ENCODE measurements at regions of chr14 and their contacts with region 1.

Region 1: GRCh38 chr14:69398053-69398817 is at the starts of genes ERH and SLC39A9:
- DNase-seq: peak; percentile 98
- ATAC-seq: peak; percentile 83
- H3K4me3 ChIP-seq: peak within 1 kb of the TSS; percentile 82 to 99 (median 94)
- H3K4me3 Mint-ChIP-seq: peak within 1 kb of the TSS; percentile 95
- H3K27ac ChIP-seq: peak within 1 kb of the TSS; percentile 90 to 99
- H3K27ac Mint-ChIP-seq: peak within 1 kb of the TSS; percentile 98
- H3K4me1 ChIP-seq: peaks cover 41 to 47% of the 10 kb centered on the region in 2 donors
- H3K4me1 Mint-ChIP-seq: peaks cover 57% of the 10 kb centered on the region
- H3K27me3 ChIP-seq: no peaks in the 10 kb centered on the region
- H3K27me3 Mint-ChIP-seq: no peaks in the 10 kb centered on the region
- CTCF ChIP-seq: no peak
- total RNA-seq, gene ERH: 156 and 169 TPM in 2 replicates
- total RNA-seq, gene SLC39A9: 59.1 and 66.2 TPM in 2 replicates

Region 2: DNA sequence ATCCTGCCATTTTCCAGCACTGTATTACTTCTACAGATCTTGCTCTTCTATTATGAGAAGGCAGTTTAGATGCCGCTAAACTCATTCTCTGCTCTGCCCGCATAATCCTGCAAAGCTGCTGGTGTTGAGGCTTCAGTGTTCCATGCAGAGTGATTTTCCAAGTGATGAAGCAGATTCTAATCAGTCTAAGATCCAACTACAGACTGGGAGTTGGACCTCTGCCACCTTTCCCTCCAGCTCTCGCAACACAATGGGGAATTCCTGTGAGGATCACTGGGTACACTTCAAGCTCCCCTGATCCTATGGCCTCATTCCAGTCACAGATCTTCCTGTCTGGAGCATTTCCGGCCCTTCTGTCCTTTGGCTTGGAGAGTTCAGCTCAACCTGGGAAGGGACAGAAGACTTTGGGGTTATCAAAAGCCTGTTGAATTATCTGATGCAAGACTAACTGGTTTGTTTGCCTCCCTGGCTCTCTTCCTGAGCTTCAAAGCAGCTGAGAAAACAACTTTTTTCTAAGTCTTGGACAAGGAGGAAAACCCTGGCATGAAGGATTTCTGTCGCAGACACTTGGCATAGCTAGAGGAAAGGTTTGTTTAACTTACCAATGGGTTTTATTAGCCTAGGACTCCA is 939.3 kb before region 1 on chr14:
- CTCF ChIA-PET with region 1: no interaction called
- POLR2A ChIA-PET with region 1: no interaction called
- intact Hi-C with region 1: no loop called
- DNase-seq: no peak
- ATAC-seq: no peak
- H3K4me3 ChIP-seq: no peak overlapping the region
- H3K4me3 Mint-ChIP-seq: no peak overlapping the region
- H3K27ac ChIP-seq: no peak overlapping the region
- H3K27ac Mint-ChIP-seq: peak overlapping the region; percentile 59
- H3K4me1 ChIP-seq: peaks cover 12% of the 10 kb centered on the region in 2 donors
- H3K4me1 Mint-ChIP-seq: peaks cover 11% of the 10 kb centered on the region
- H3K27me3 ChIP-seq: no peaks in the 10 kb centered on the region
- H3K27me3 Mint-ChIP-seq: no peaks in the 10 kb centered on the region
- CTCF ChIP-seq: no peak

Region 3: DNA sequence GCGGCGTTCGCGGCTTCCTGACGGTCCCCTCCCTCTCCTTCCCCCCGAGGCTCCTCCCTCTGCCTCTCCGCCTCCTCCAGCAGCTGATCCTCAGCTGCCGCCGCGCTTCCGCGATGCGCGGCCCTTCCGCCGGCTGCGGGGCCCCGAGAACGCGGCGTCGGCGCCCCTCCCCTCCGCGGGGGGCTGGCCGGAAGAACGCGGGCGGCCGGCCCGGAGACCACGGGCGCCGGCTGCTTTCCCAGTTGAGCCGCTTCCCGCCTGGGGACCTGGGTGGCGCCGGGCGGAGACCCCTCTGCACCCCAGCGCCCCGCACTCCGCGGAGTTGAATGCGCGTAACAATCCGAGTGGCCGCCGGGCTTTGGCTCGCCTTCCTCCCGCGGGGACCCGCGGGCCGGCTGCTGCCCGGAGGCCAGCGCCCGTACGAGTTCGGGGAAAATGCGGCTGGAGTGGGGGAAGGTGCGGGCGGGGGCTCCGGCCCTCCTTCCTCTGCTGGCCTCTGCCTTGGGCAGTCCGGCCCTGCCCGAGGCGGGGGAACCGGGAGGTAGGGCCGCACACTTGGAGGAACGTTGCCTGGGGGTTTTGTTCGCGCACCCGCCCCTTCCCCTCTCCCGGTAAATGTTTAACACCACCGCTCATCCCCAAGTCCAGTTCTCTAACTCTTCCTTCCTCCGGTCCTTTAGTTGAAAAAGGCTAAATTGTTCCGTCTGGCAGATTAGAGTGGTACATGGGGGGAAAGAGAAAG is 244.9 kb before region 1 on chr14:
- CTCF ChIA-PET with region 1: no interaction called
- POLR2A ChIA-PET with region 1: no interaction called
- intact Hi-C with region 1: loop called (anchors 1 kb)
- DNase-seq: peak; percentile 95
- ATAC-seq: peak; percentile 92
- H3K4me3 ChIP-seq: peak overlapping the region; percentile 21 to 94 (median 92)
- H3K4me3 Mint-ChIP-seq: peak overlapping the region; percentile 89
- H3K27ac ChIP-seq: peak overlapping the region; percentile 56 to 72
- H3K27ac Mint-ChIP-seq: peak overlapping the region; percentile 95
- H3K4me1 ChIP-seq: peaks cover 9 to 21% of the 10 kb centered on the region in 2 donors
- H3K4me1 Mint-ChIP-seq: peaks cover 32% of the 10 kb centered on the region
- H3K27me3 ChIP-seq: no peaks in the 10 kb centered on the region
- H3K27me3 Mint-ChIP-seq: peaks cover 3% of the 10 kb centered on the region
- CTCF ChIP-seq: no peak

Region 4: DNA sequence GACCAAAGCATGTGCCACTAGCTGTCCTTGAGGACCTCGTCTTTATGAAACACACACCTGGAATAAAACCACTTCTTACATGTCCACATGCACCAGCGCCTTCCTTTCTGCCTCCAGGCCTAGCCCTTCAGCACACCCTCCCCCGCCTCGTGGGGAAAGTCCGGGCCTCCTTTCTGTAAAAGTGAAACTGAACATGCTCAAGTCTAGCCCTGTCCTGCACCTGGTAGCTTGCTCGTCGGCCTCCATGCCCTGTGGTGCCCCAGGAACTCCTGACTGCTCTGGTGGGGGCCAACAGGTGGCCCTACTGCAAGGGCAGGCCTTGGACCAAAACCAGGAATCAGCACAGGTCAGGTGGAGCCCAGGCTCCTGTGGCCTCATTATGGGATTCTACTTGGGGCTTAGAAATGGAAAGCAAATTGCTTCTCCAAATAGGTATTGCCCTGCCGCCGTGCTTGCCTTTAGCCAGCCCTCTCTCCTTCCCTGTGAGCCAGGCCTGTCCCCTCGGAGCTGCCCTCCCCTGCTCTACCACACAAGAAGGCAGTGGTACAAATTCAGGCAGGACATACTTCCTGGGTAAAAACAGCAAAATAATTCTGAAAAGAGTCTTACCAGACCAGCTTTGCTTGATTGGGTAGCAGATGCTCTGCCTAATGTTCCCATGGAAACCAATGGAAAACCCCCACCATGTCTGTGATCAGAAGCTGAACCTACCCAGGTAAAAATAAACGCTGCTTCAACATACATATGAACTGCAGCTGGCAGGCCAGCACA is 43.7 kb before region 1 on chr14:
- CTCF ChIA-PET with region 1: interaction called, 3 read pairs
- POLR2A ChIA-PET with region 1: interaction called, 8 read pairs
- intact Hi-C with region 1: loop called (anchors 1 kb)
- DNase-seq: peak; percentile 85
- ATAC-seq: peak; percentile 90
- H3K4me3 ChIP-seq: peak overlapping the region in 3 of 5 experiments; percentile 30 to 48 (median 31)
- H3K4me3 Mint-ChIP-seq: peak overlapping the region; percentile 81
- H3K27ac ChIP-seq: peak overlapping the region; percentile 87 to 93
- H3K27ac Mint-ChIP-seq: peak overlapping the region; percentile 94
- H3K4me1 ChIP-seq: peaks cover 27 to 45% of the 10 kb centered on the region in 2 donors
- H3K4me1 Mint-ChIP-seq: peaks cover 49% of the 10 kb centered on the region
- H3K27me3 ChIP-seq: no peaks in the 10 kb centered on the region
- H3K27me3 Mint-ChIP-seq: no peaks in the 10 kb centered on the region
- CTCF ChIP-seq: no peak

Region 5: DNA sequence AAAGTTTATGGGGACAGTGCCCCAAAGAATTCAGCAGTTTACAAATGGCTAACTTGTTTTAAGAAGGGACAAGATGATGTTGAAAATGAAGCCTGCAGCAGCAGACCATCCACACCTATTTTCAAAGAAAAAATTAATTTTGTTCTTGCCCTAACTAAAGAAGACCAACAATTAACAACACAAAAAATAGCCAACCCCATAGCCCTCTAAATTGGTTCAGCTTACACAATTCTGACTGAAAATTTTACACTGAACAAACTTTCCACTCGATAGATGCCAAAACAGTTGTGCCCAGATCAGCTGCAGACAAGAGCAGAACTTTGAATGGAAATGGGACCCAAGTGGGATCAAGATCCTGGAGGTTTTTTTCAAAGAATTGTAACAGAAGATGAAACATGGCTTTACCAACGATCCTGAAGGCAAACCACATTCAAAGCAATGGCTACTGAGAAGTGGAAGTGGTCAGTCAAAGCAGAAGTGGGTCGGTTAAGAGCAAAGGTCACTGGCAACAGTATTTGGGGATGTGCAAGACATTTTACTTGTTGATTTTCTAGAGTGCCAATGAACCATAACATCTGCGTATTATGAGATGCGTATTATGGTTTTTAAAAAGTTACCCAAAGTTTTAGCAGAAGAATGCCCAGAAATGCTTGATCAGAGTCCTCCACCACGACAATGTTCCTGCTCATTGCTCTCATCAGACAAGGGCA is 30.2 kb after region 1 on chr14:
- CTCF ChIA-PET with region 1: interaction called, 3 read pairs
- POLR2A ChIA-PET with region 1: interaction called, 4 read pairs
- intact Hi-C with region 1: loop called (anchors 2 kb)
- DNase-seq: peak; percentile 27
- ATAC-seq: peak; percentile 91
- H3K4me3 ChIP-seq: no peak overlapping the region
- H3K4me3 Mint-ChIP-seq: peak overlapping the region; percentile 73
- H3K27ac ChIP-seq: no peak overlapping the region
- H3K27ac Mint-ChIP-seq: peak overlapping the region; percentile 90
- H3K4me1 ChIP-seq: peaks cover 7 to 9% of the 10 kb centered on the region in 2 donors
- H3K4me1 Mint-ChIP-seq: peaks cover 30% of the 10 kb centered on the region
- H3K27me3 ChIP-seq: no peaks in the 10 kb centered on the region
- H3K27me3 Mint-ChIP-seq: no peaks in the 10 kb centered on the region
- CTCF ChIP-seq: no peak

Region 6: DNA sequence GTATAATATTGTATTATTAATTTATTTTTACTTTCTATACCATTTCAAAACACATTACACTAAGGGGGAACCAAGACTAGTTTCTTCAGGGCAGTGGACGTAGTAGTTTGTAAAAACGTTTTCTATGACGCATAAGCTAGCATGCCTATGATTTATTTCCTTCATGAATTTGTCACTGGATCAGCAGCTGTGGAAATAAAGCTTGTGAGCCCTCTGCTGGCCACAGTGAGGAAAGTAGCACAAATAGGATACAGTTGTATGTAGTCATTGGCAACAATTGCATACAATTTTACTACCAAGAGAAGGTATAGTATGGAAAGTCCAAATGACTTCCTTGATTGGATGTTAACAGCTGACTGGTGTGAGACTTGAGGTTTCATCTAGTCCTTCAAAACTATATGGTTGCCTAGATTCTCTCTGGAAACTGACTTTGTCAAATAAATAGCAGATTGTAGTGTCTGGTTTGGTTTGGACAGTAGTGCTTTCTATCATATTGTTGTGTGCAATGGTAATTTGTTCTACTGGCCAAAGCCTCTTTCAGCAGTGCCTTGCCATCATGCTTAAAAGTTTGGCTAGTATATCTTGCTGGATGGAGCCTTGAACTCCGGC is 62.0 kb after region 1 on chr14:
- CTCF ChIA-PET with region 1: interaction called, 36 read pairs
- POLR2A ChIA-PET with region 1: interaction called, 3 read pairs
- intact Hi-C with region 1: loop called (anchors 1 kb)
- DNase-seq: peak; percentile 72
- ATAC-seq: peak; percentile 95
- H3K4me3 ChIP-seq: no peak overlapping the region
- H3K4me3 Mint-ChIP-seq: no peak overlapping the region
- H3K27ac ChIP-seq: no peak overlapping the region
- H3K27ac Mint-ChIP-seq: no peak overlapping the region
- H3K4me1 ChIP-seq: no peaks in the 10 kb centered on the region
- H3K4me1 Mint-ChIP-seq: peaks cover 3% of the 10 kb centered on the region
- H3K27me3 ChIP-seq: no peaks in the 10 kb centered on the region
- H3K27me3 Mint-ChIP-seq: no peaks in the 10 kb centered on the region
- CTCF ChIP-seq: peak; percentile 80

Region 7: DNA sequence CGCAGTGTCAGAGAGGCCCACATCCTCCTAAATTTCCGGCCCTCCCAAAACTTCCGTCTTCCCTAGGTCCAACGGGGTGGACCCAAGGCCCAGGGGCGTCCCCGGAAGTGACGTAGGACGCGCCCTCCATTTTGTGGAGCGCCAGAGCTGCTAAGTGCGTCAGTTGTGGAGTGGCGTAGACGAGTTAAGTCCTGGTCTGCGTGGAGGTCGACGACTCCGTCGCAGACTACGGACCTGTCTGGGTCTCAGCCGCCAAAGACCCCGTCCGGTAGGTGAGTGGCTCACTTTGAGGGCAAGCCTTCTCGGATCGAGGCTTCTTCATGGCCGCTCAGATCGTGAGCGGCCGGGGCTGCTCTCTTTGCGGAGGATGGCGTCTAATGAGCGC is 368.7 kb after region 1 on chr14 and contains the start of gene SRSF5:
- CTCF ChIA-PET with region 1: no interaction called
- POLR2A ChIA-PET with region 1: interaction called, 5 read pairs
- intact Hi-C with region 1: loop called (anchors 1 kb)
- DNase-seq: peak; percentile 98
- ATAC-seq: peak; percentile 80
- H3K4me3 ChIP-seq: peak within 1 kb of the TSS; percentile 97 to 100 (median 99)
- H3K4me3 Mint-ChIP-seq: peak within 1 kb of the TSS; percentile 98
- H3K27ac ChIP-seq: peak within 1 kb of the TSS; percentile 99 to 100
- H3K27ac Mint-ChIP-seq: peak within 1 kb of the TSS; percentile 100
- H3K4me1 ChIP-seq: peaks cover 26 to 27% of the 10 kb centered on the region in 2 donors
- H3K4me1 Mint-ChIP-seq: peaks cover 43% of the 10 kb centered on the region
- H3K27me3 ChIP-seq: no peaks in the 10 kb centered on the region
- H3K27me3 Mint-ChIP-seq: no peaks in the 10 kb centered on the region
- CTCF ChIP-seq: no peak
- total RNA-seq, gene SRSF5: 708 and 768 TPM in 2 replicates